ENCODE measurements at regions of chr4 and their contacts with region 1.

Region 1: DNA sequence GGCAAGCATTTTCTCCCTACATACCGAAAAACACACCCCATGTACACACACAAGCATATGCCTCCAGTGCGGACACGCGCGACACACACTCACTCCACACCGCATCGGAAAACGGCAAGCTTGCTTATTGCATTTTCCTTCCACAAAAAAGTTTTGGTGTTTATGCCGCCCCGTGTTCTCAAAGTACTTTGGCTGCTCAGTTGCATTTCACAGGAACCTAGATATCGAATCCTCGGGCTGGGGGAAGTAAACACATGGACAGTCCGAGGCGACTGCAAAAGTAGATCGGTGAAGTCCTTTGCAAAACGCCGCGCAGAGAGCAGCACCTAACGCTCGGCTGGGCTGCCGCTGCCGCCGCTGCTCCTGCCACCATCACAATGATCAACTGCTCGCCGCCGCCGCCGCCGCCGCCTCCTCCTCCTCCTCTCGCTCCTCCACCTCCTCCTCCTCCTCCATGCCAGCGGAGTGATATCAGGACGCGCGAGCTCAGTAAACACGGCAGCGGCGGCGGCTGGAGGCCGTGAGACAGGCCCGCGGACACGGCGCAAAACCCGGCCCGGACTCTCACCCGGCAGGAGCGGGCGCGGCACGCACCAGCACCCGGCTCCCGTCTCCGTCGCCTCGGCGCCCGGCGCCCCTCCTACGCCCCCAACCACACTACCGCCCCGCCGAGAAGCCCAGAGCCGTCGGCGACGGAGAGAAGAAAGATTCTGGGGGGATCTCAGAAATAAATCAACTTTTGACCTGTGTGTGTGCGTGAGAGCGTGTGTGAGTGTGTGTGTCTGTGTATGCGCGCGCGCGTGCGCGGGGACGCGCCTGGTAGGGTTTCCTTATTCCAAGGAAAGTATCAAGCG is at the start of gene MAML3:
- DNase-seq: peak; percentile 98
- total RNA-seq, gene MAML3: 6.3 to 6.5 TPM

Region 2: DNA sequence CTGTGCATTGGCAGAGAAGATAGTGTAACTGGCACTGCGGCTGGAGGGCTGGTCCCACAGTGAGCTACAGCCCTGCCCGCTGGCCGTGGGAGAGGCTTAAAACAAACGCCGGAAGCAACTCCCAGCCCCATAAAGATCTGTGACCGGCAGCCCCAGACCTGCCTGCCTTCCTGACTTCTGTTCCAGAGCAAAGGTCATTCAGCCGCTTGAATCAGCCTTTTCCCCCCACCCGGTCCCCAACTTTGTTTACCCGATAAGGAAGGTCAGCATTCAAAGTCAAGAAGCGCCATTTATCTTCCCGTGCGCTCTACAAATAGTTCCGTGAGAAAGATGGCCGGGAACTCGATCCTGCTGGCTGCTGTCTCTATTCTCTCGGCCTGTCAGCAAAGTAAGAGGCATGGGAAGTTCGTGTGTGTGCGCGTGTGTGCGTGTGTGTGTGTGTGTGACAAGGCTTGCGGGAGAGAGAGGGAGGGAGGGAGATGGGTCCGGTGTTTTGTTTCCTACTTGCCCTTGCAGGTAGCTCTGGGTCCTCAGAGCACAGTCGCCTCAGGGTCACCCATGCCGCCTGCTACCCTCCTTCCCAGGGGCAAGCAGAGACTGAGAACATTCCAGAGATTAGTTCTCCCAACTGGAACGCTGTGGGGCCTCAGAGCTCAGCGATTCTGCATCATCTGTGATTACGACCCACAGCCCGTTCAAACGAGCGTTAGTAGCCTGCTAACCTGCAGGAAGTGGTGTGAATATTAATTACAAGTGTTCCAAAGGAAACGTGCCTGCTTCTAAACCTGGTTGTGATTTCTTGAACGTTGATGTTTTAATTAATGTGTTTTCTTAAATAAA is 488.0 kb before region 1 on chr4 and contains the start of gene MGST2:
- intact Hi-C with region 1: loop called in 1 of 2 experiments (anchors 10 kb)
- DNase-seq: peak; percentile 91
- total RNA-seq, gene MGST2: 41.1 to 41.2 TPM

Region 3: GRCh38 chr4:139734875-139735380 is 419.0 kb before region 1 on chr4:
- intact Hi-C with region 1: loop called (anchors 5 kb)
- DNase-seq: peak; percentile 96

Region 4: DNA sequence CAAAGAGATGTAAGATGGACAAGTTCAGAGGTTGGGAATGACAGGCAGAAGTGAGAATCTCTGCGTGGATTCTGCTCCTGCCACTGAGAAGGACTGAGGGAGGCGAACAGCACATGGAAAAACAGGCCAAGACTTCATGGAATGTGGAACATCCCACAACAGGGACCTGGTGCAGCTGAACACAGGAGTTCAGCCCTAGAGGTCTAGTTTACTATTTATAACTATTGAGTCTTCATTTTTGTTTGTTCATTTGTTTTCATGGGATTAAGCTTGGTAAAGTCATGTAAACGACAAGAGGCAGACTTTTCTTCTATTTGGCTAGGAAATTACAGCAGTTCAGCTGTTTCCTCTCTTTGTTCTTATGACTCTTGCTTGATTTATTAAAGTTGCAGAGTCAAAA is 234.4 kb before region 1 on chr4:
- intact Hi-C with region 1: loop called in 1 of 2 experiments (anchors 10 kb)
- DNase-seq: no peak

Region 5: DNA sequence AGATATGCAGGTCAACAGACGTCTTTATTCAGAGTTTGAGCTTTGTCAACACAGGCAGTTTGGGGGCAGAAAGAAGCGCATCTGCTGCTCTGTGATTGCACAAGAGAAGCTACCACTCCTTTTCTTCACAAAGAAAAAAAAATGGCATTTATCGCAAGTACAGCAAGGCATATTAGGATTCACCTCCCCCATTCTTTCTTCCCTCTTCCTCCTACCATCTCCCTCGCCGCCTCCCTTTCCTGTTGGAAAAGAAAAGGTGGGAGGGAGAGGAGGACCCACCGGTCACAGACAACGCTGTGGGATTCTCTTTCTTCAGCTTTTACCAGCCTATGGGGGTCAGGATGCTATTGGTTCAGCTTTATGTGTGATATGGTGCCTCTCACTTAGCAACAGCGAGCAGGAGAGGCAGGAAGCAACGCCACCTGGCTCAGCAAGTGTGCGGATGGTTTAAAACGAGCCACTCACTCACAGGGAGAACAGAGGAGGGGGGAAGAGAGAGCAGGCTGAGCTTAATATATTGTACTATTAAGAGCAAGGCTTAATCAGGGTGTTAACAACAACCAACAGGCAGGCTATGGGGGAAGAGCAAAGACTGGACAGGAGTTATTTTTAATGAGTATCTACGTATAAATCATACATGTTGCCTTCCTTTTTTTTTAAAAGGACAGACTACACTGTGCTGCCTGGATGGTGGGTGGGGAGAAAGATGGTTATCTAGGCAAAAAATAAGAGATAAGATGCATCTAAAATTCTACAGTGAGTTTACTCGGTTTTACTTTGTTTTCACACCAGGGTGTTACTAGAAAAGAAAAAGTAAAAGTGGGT is 104.7 kb before region 1 on chr4:
- intact Hi-C with region 1: loop called (anchors 5 to 10 kb)
- DNase-seq: no peak

Region 6: DNA sequence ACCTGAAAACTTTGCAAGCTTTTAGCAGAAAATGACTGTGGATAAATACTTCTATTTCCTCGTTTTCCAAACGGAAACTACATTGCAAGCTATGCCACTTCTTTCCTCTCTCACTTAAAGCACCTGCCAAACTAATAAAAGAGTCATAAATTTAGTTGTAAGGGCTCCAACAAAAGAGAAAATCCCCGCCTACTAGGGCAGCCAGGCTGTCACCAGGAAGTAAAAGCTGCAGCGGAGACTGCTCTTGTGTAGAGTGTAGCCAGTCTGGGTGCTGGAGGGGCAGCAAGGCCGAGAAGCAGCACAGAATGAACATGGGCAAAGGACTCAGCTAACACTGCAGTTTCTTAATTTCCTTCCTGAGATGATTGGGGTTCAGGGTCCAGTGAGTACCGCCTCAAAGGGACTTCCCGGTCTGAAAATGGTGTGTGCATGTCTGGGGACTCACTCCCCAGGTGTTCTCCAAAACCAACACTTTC is 89.4 kb after region 1 on chr4:
- intact Hi-C with region 1: loop called in 1 of 2 experiments (anchors 5 kb)
- DNase-seq: no peak

Region 7: GRCh38 chr4:140252742-140253555 is 99.0 kb after region 1 on chr4:
- intact Hi-C with region 1: loop called (anchors 1 to 5 kb)
- DNase-seq: peak; percentile 91

Measured in posterior vena cava (tissue), 2 donors.